Naive thymus-derived CD4-positive, alpha-beta T cell (primary cell): ENCODE measurements at regions of chr9 and their contacts with region 1.

Region 1: DNA sequence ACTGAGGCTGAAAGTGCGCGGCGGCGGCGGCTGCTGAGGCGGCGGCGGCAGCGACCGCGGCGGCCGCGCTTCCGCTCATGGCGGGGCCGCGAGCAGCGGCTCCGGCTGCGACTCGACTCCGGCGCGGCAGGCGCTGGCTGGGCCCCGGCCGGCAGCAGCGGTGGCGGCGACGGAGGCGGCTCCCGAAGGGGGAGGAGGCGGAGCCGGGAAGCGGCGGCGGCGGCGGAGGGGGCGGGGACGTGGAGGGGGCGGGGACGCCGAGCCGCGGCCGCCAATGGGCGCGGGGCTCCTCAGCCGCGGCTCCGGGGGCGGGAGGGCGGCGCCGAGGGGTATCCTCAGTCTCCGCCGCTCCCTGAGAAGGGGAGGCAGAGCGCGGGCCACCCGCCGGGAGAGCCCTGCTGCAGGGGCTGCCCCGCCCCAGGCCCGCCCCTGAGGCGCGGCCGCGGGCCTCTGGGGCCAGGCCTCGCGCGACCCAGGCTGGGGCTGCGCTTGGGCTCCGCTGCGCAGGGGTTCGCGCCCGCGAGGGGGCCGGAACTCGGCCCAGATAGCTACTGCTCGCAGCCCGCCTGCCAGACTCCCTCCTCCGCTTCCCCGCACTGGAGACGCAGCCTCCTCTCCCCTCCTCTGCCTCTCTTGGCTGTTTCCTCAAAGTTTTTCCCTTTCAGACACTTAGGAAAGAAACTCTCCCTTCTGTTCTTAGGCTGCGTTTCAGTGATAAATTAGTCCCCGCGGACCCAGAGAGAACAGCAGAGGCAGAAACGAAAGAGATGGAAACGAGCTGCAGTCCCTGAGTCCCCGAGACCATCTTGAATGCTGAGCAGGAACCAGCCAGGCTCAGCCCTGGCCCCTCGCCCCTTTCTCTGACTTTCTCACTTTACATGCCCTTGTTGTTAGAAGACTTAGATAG is 85.0 kb upstream of the MELK start:
- DNase-seq: peak; percentile 84 to 93 (median 89)
- ATAC-seq: peak; percentile 94
- H3K4me3 ChIP-seq: peak overlapping the region; percentile 77
- H3K4me3 Mint-ChIP-seq: peak overlapping the region; percentile 87 to 99 (median 96)
- H3K27ac ChIP-seq: peak overlapping the region; percentile 96
- H3K27ac Mint-ChIP-seq: peak overlapping the region; percentile 95 to 100 (median 98)
- H3K4me1 ChIP-seq: peaks cover 30 to 39% of the 10 kb centered on the region in 2 donors
- H3K4me1 Mint-ChIP-seq: peaks cover 33 to 77% (median 64%) of the 10 kb centered on the region in 7 donors
- H3K27me3 ChIP-seq: no peaks in the 10 kb centered on the region
- H3K27me3 Mint-ChIP-seq: no peaks in the 10 kb centered on the region

Region 2: GRCh38 chr9:36136272-36136893 is 351.4 kb before region 1 on chr9 and contains the start of gene GLIPR2:
- CTCF ChIA-PET with region 1: no interaction called
- POLR2A ChIA-PET with region 1: no interaction called
- intact Hi-C with region 1: loop called in 1 of 2 experiments (anchors 5 kb)
- DNase-seq: peak; percentile 60 to 88 (median 69)
- ATAC-seq: peak; percentile 97
- H3K4me3 ChIP-seq: peak within 1 kb of the TSS; percentile 78
- H3K4me3 Mint-ChIP-seq: peak within 1 kb of the TSS; percentile 83 to 99 (median 93)
- H3K27ac ChIP-seq: peak within 1 kb of the TSS; percentile 74
- H3K27ac Mint-ChIP-seq: peak within 1 kb of the TSS; percentile 25 to 94 (median 87)
- H3K4me1 ChIP-seq: peaks cover 43 to 49% of the 10 kb centered on the region in 2 donors
- H3K4me1 Mint-ChIP-seq: peaks cover 43 to 52% (median 49%) of the 10 kb centered on the region in 7 donors
- H3K27me3 ChIP-seq: no peaks in the 10 kb centered on the region
- H3K27me3 Mint-ChIP-seq: peaks cover 0 to 39% (median 0%) of the 10 kb centered on the region in 5 donors
- total RNA-seq, gene GLIPR2: 7.7 to 74.7 (median 18.6) TPM

Region 3: DNA sequence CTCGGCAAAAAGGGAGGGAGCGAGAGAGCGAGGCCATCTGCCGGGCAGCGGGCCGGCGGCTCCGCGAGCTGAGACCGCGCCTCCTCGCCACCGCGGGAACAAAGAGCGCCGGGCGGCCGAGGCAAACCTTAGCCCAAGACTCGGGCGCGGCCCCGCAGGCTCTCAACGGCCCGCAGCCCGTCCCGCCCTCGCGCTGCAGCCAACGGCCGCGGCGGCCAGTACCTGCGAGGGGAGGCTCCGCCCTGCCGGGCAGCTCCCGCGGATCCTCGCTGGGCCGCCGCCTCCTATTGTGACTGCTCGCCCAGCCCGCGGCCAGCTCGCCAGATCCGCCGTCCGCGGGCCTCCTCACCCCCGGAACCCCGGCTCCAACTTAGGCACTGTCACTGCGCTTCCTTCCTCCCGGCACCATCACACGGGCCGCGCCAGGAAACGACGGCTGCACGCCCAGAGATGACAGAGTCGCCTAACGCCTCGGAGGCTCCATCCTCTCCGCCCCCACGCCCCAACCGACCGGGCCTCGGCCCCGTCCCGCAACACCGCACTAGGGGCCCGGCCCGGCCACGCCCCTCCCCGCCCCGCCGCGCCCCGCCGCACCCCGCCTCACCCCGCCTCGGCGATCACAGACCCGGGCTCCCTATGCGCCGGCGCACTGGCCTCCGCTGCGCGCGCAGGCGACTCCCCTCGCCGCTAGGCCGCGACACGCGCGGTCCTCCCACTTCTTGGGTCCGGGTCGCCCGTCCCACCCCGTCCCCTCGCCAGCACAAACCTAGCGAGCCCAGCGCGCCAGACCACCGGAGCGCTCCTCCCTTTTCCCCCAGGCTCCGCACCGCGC is 87.2 kb before region 1 on chr9:
- CTCF ChIA-PET with region 1: interaction called, 5 read pairs
- POLR2A ChIA-PET with region 1: interaction called, 16 read pairs
- intact Hi-C with region 1: loop called (anchors 1 kb)
- DNase-seq: peak; percentile 83 to 94 (median 91)
- ATAC-seq: peak; percentile 88
- H3K4me3 ChIP-seq: peak overlapping the region; percentile 77
- H3K4me3 Mint-ChIP-seq: peak overlapping the region; percentile 85 to 97 (median 92)
- H3K27ac ChIP-seq: peak overlapping the region; percentile 94
- H3K27ac Mint-ChIP-seq: peak overlapping the region; percentile 92 to 98 (median 95)
- H3K4me1 ChIP-seq: peaks cover 16 to 26% of the 10 kb centered on the region in 2 donors
- H3K4me1 Mint-ChIP-seq: peaks cover 32 to 60% (median 54%) of the 10 kb centered on the region in 7 donors
- H3K27me3 ChIP-seq: no peaks in the 10 kb centered on the region
- H3K27me3 Mint-ChIP-seq: peaks cover 0 to 2% (median 0%) of the 10 kb centered on the region in 5 donors

Region 4: GRCh38 chr9:36470643-36471290 is 17.0 kb before region 1 on chr9:
- CTCF ChIA-PET with region 1: interaction called, 6 read pairs
- POLR2A ChIA-PET with region 1: interaction called, 38 read pairs
- intact Hi-C with region 1: loop called (anchors 1 kb)
- DNase-seq: peak in 8 of 9 donors; percentile 41 to 70 (median 60)
- ATAC-seq: peak; percentile 95
- H3K4me3 ChIP-seq: peak overlapping the region; percentile 51
- H3K4me3 Mint-ChIP-seq: peak overlapping the region; percentile 79 to 94 (median 86)
- H3K27ac ChIP-seq: peak overlapping the region; percentile 74
- H3K27ac Mint-ChIP-seq: peak overlapping the region; percentile 92 to 97 (median 96)
- H3K4me1 ChIP-seq: peaks cover 16 to 27% of the 10 kb centered on the region in 2 donors
- H3K4me1 Mint-ChIP-seq: peaks cover 27 to 52% (median 42%) of the 10 kb centered on the region in 7 donors
- H3K27me3 ChIP-seq: no peaks in the 10 kb centered on the region
- H3K27me3 Mint-ChIP-seq: no peaks in the 10 kb centered on the region

Region 5: GRCh38 chr9:36537861-36538260 is 50.1 kb after region 1 on chr9:
- CTCF ChIA-PET with region 1: no interaction called
- POLR2A ChIA-PET with region 1: no interaction called
- intact Hi-C with region 1: no loop called
- DNase-seq: no peak
- ATAC-seq: no peak
- H3K4me3 ChIP-seq: no peak overlapping the region
- H3K4me3 Mint-ChIP-seq: no peak overlapping the region
- H3K27ac ChIP-seq: no peak overlapping the region
- H3K27ac Mint-ChIP-seq: no peak overlapping the region
- H3K4me1 ChIP-seq: no peaks in the 10 kb centered on the region
- H3K4me1 Mint-ChIP-seq: peaks cover 0 to 5% (median 0%) of the 10 kb centered on the region in 7 donors
- H3K27me3 ChIP-seq: no peaks in the 10 kb centered on the region
- H3K27me3 Mint-ChIP-seq: peaks cover 0 to 7% (median 0%) of the 10 kb centered on the region in 5 donors

Region 6: DNA sequence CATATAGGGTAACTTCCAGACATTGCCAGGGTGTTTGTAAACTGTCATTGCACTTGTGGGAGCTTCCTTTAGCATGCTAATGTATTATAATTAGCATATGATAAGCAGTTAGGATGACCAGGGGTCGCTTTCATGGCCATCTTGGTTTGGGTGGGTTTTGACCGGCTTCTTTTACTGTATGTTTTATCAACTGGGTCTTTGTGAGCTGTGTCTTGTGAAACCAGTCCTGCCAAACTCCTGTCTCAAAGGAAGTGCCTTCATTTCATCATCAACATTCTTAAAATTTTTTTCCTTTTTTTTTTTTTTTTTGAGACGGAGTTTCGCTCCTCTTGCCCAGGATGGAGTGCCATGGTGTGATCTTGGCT is 73.1 kb after region 1 on chr9:
- CTCF ChIA-PET with region 1: interaction called, 3 read pairs
- POLR2A ChIA-PET with region 1: no interaction called
- intact Hi-C with region 1: loop called (anchors 1 kb)
- DNase-seq: no peak
- ATAC-seq: no peak
- H3K4me3 ChIP-seq: no peak overlapping the region
- H3K4me3 Mint-ChIP-seq: no peak overlapping the region
- H3K27ac ChIP-seq: no peak overlapping the region
- H3K27ac Mint-ChIP-seq: no peak overlapping the region
- H3K4me1 ChIP-seq: no peaks in the 10 kb centered on the region
- H3K4me1 Mint-ChIP-seq: peaks cover 0 to 2% (median under 1%) of the 10 kb centered on the region in 7 donors
- H3K27me3 ChIP-seq: no peaks in the 10 kb centered on the region
- H3K27me3 Mint-ChIP-seq: no peaks in the 10 kb centered on the region

Region 7: DNA sequence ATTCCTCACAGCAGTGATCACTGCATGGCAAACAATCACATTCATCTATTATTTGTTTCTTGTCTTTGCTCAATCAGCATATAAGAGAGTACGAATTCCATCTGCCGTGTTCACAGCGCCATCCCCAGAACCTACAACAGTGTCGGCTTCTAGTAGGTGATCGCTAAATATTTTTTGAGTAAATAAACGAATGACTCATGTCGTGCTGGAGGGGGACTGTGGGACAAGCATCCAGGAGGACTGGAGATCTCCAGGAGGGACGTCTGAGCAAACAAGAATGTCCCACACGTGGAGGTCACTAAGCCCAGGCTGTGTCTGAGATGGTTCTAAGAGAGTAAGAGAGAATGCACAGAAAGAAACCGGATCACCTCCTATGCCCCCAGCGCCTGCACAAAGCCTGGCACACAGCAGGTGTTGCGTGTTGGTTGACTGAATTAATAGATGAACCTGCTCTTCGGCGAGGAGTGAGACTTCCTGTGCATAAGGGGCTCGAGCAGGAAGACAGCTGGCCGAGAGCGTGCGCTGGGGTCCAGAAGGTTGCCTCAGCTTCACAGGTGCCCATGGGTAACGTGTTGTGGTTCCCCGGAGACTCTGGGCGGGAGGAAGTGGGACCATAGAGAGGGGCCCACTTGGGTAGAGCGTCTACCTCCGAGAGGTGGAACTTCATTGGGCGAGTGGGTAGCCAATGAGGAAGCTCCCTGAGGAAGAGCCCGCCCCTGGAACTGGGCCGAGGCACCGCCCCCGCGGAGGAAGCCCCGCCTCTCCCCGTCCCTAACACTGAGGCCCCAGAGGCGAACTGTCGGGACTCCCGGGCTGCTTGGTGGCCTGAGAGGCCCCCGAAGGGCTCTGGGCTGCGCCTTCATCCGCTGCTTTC is 278.0 kb after region 1 on chr9:
- CTCF ChIA-PET with region 1: no interaction called
- POLR2A ChIA-PET with region 1: no interaction called
- intact Hi-C with region 1: loop called in 1 of 2 experiments (anchors 2 kb)
- DNase-seq: peak; percentile 81 to 96 (median 91)
- ATAC-seq: peak; percentile 100
- H3K4me3 ChIP-seq: peak overlapping the region; percentile 56
- H3K4me3 Mint-ChIP-seq: no peak overlapping the region
- H3K27ac ChIP-seq: peak overlapping the region; percentile 56
- H3K27ac Mint-ChIP-seq: no peak overlapping the region
- H3K4me1 ChIP-seq: no peaks in the 10 kb centered on the region
- H3K4me1 Mint-ChIP-seq: peaks cover 0 to 6% (median 2%) of the 10 kb centered on the region in 7 donors
- H3K27me3 ChIP-seq: no peaks in the 10 kb centered on the region
- H3K27me3 Mint-ChIP-seq: peaks cover 0 to 16% (median 11%) of the 10 kb centered on the region in 5 donors